ENCODE measurements at regions of chr4 and their contacts with region 1.

Region 1: DNA sequence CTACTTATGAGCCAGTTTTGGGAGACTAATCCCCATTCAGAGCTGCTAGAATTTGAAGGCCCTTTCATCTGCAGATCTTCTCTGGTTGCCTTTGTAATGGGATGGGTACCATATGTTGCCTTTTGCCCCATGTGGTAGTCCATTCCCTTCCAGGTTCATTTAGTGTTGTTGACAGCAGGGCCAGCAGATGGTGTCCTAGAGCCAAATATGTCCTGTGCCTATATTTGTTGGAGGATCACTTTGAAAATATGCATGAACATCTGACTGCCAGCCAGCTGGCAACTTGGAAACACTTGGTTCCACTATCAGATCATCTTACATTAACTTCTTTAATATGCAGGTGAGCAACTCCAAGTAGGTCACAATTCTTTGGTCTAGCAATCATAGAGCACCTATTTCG is 30.4 kb downstream of the CFAP299 start:
- DNase-seq: peak; percentile 92
- H3K4me3 ChIP-seq: no peak overlapping the region
- H3K27ac ChIP-seq: peak overlapping the region; percentile 80
- H3K4me1 ChIP-seq: peaks cover 40% of the 10 kb centered on the region
- CTCF ChIP-seq: peak; percentile 92

Region 2: GRCh38 chr4:80484712-80485111 is 118.8 kb after region 1 on chr4:
- CTCF ChIA-PET with region 1: no interaction called
- POLR2A ChIA-PET with region 1: no interaction called
- intact Hi-C with region 1: loop called (anchors 2 kb)
- DNase-seq: no peak
- H3K4me3 ChIP-seq: no peak overlapping the region
- H3K27ac ChIP-seq: no peak overlapping the region
- H3K4me1 ChIP-seq: peaks cover 42% of the 10 kb centered on the region
- CTCF ChIP-seq: no peak

Region 3: DNA sequence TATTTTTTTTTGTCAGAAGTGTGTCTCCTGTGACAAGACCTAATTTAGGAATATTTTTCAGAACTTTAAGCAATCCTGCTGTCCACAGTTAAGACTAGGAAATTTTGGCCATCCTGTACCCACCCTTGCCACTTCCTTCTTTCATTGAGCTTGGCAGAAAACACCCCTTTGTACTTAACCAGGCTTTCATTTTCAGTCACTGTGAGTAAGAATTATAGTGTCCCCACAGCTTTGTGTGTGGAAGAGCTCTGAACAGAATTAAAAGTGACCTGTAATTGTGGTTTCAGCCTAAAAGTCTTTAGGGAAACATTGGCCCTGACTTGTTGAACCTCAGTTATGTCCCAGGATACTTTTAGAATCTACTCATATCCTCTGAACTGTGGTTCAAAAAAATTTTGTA is 510.9 kb after region 1 on chr4:
- CTCF ChIA-PET with region 1: no interaction called
- POLR2A ChIA-PET with region 1: no interaction called
- intact Hi-C with region 1: loop called (anchors 2 kb)
- DNase-seq: peak; percentile 67
- H3K4me3 ChIP-seq: peak overlapping the region; percentile 4
- H3K27ac ChIP-seq: peak overlapping the region; percentile 98
- H3K4me1 ChIP-seq: peaks cover 58% of the 10 kb centered on the region
- CTCF ChIP-seq: no peak

Region 4: GRCh38 chr4:81040012-81040659 is 674.2 kb after region 1 on chr4:
- CTCF ChIA-PET with region 1: interaction called, 5 read pairs
- POLR2A ChIA-PET with region 1: interaction called, 8 read pairs
- intact Hi-C with region 1: loop called (anchors 1 kb)
- DNase-seq: peak; percentile 82
- H3K4me3 ChIP-seq: peak overlapping the region; percentile 52
- H3K27ac ChIP-seq: peak overlapping the region; percentile 92
- H3K4me1 ChIP-seq: peaks cover 72% of the 10 kb centered on the region
- CTCF ChIP-seq: peak; percentile 96

Region 5: GRCh38 chr4:81069706-81070331 is 703.9 kb after region 1 on chr4:
- CTCF ChIA-PET with region 1: interaction called, 3 read pairs
- POLR2A ChIA-PET with region 1: no interaction called
- intact Hi-C with region 1: loop called (anchors 2 kb)
- DNase-seq: peak; percentile 92
- H3K4me3 ChIP-seq: no peak overlapping the region
- H3K27ac ChIP-seq: no peak overlapping the region
- H3K4me1 ChIP-seq: peaks cover 8% of the 10 kb centered on the region
- CTCF ChIP-seq: peak; percentile 97

Region 6: DNA sequence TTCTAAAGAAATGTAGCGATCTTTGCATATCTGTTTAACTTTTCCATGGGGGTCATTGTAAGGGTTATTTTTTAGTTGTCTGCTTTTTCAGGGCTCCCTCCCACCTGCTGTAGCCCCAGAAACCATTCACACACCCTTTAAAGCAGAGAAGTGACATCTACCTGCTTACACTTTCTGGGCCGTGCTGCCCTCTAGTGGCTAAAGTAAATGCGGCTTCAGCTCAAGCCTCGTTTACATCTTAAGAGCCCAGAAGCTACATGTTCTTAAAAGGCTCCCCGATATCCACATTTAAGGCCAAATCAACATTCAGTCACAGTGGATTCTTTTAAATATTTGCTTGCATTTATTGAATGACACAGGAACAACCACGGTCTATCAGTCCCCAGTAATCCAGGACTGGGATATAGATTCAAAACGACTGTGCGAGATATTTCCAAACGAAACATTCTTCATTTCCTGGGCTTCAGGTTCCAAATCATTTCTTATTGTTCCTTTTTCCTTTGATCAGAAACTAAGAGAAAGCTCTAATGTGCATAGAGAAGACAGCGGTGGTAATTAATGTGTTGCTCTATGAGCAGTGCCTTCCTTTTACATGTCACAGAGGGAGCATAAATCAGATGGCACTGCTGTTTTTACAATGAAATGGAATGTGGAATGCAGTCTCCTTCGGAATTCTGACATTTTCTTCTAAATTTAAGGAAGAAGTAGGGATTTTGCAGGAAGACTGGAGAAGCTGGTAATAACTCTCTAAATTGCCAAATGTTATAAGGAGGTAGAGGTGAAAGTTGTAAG is 985.9 kb after region 1 on chr4:
- CTCF ChIA-PET with region 1: interaction called, 3 read pairs
- POLR2A ChIA-PET with region 1: interaction called, 4 read pairs
- intact Hi-C with region 1: loop called (anchors 1 kb)
- DNase-seq: peak; percentile 82
- H3K4me3 ChIP-seq: no peak overlapping the region
- H3K27ac ChIP-seq: no peak overlapping the region
- H3K4me1 ChIP-seq: no peaks in the 10 kb centered on the region
- CTCF ChIP-seq: peak; percentile 99

Measured in OCI-LY7 (cell line).